ENCODE measurements at regions of chr14 and their contacts with region 1.

Region 1: DNA sequence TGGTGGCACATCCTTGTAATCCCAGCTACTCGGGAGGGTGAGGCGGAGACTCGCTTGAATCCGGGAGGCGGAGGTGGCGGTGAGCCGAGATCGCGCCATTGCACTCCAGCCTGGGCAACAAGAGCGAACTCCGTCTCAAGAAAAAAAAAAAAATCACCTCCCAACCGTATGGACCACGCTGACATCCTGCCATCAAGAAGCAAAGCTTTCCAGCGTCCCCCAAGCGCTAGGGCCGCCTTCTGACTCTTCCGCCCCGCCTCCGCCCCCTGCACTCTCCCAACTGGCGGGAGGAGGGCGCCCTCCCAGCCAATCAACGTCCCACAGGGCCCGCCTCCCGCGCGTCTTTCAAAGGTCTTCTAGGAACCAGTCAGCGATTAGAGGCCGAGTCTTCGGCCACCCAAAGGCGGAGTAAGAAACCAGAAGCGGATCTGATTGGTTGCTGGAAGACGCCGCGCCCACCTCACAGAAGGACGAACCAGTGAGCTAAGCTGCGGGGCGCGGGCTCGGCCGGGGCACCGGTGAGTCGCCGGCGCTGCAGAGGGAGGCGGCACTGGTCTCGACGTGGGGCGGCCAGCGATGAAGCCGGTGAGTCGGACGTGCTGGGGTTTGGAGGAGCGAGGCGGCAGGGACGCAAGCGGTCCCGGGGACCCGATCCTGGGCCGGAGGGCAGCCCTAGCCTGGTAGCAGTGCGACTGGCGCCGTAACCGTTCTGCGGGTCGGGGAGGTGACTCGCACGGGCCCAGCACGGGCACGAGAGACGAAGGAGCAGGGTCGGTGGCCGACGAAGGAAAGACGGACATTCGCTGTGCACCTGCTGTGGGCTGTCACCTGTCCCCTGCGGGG is at the start of gene CDKN3:
- DNase-seq: peak; percentile 99
- H3K4me3 Mint-ChIP-seq: peak within 1 kb of the TSS; percentile 86
- H3K27ac Mint-ChIP-seq: peak within 1 kb of the TSS; percentile 65
- H3K4me1 Mint-ChIP-seq: peaks cover 8% of the 10 kb centered on the region
- H3K27me3 Mint-ChIP-seq: peaks cover 2% of the 10 kb centered on the region
- total RNA-seq, gene CDKN3: 96.5 to 101 TPM

Region 2: GRCh38 chr14:52706724-52707706 is 1689.7 kb before region 1 on chr14 and contains the start of gene PSMC6:
- CTCF ChIA-PET with region 1: no interaction called
- intact Hi-C with region 1: loop called (anchors 1 kb)
- DNase-seq: peak; percentile 97
- H3K4me3 Mint-ChIP-seq: peak within 1 kb of the TSS; percentile 100
- H3K27ac Mint-ChIP-seq: peak within 1 kb of the TSS; percentile 97
- H3K4me1 Mint-ChIP-seq: peaks cover 47% of the 10 kb centered on the region
- H3K27me3 Mint-ChIP-seq: no peaks in the 10 kb centered on the region
- total RNA-seq, gene PSMC6: 103 to 114 TPM

Region 3: DNA sequence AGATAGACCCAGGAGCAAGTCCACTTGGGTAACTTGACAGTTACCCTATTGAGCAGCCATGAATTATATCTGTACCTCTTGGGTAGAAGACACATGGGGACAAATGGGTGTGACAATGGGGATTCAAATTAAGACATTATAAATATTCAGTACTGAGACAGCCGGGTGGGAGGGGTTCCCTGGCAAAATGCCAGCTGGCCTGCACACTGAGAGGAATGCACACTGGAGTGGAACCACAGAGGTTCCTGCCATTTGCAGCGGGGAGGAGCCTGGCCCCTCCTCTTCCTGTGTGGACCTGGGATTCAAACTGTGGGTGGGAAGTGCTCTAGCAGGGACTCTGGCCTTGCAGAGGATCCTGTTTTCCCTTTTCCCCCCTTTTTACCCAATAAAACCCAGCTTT is 118.6 kb before region 1 on chr14:
- CTCF ChIA-PET with region 1: no interaction called
- intact Hi-C with region 1: no loop called
- DNase-seq: no peak
- H3K4me3 Mint-ChIP-seq: no peak overlapping the region
- H3K27ac Mint-ChIP-seq: no peak overlapping the region
- H3K4me1 Mint-ChIP-seq: no peaks in the 10 kb centered on the region
- H3K27me3 Mint-ChIP-seq: peaks cover 8% of the 10 kb centered on the region

Region 4: GRCh38 chr14:54427871-54428270 is 31.2 kb after region 1 on chr14:
- CTCF ChIA-PET with region 1: no interaction called
- intact Hi-C with region 1: loop called (anchors 1 kb)
- DNase-seq: no peak
- H3K4me3 Mint-ChIP-seq: no peak overlapping the region
- H3K27ac Mint-ChIP-seq: no peak overlapping the region
- H3K4me1 Mint-ChIP-seq: peaks cover 45% of the 10 kb centered on the region
- H3K27me3 Mint-ChIP-seq: no peaks in the 10 kb centered on the region

Region 5: DNA sequence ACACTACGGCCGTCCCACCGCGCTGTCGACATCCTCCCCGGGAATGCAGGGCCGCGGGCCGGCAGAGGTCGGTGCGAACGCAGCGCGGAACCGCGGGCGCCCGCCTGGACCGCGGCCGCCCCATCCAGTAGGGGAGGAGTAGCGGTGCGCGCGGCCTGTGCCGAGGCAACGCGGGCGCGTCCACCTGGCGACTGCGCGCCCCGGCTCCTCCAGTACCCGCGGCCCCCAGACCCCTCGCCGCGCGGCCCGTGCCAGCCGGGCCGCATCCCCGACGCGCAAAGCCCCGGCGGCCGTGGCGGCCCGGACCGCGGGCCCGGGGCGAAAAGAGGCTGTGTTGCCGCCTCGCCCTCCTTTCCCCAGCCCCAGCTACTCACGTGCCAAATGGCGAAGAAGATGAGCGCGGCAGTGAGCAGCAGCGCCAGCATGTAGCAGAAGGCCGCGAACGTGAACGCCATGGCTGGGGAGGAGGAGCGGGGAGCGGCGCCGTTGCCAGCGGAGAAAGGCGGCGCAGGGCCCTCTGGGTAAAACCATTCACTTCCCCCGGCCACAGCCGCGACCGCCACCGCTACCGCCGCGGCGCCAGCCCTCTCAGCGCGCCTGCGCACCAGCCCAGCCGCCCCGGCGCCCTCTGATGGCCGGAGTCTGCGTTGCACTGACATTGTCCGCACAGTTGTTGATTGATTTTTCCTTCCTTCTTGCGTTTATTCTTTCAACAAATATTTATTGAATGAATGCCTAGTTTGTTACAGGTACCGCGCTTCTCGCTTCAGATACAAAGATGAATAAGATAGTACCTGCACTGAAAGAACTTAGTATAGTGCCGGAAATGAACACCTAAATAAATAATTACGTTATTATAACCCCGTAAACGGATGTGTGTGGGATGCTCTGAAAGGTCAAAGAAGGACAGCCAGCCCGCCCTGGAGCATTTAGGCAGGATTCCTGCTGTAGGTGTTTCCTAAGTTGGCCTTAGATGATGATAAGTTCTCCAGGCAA is 44.5 kb after region 1 on chr14 and contains the start of gene CNIH1:
- CTCF ChIA-PET with region 1: interaction called, 4 read pairs
- intact Hi-C with region 1: loop called (anchors 1 kb)
- DNase-seq: peak; percentile 93
- H3K4me3 Mint-ChIP-seq: peak within 1 kb of the TSS; percentile 87
- H3K27ac Mint-ChIP-seq: peak within 1 kb of the TSS; percentile 97
- H3K4me1 Mint-ChIP-seq: peaks cover 48% of the 10 kb centered on the region
- H3K27me3 Mint-ChIP-seq: no peaks in the 10 kb centered on the region
- total RNA-seq, gene CNIH1: 68.1 to 78.4 TPM

Region 6: GRCh38 chr14:54509546-54510501 is 113.1 kb after region 1 on chr14 and contains the start of gene CGRRF1:
- CTCF ChIA-PET with region 1: no interaction called
- intact Hi-C with region 1: loop called (anchors 1 kb)
- DNase-seq: peak; percentile 98
- H3K4me3 Mint-ChIP-seq: peak within 1 kb of the TSS; percentile 86
- H3K27ac Mint-ChIP-seq: peak within 1 kb of the TSS; percentile 52
- H3K4me1 Mint-ChIP-seq: peaks cover 41% of the 10 kb centered on the region
- H3K27me3 Mint-ChIP-seq: no peaks in the 10 kb centered on the region
- total RNA-seq, gene CGRRF1: 9.2 to 9.7 TPM

Region 7: GRCh38 chr14:54881235-54881760 is 484.6 kb after region 1 on chr14:
- CTCF ChIA-PET with region 1: no interaction called
- intact Hi-C with region 1: loop called (anchors 5 kb)
- DNase-seq: peak; percentile 38
- H3K4me3 Mint-ChIP-seq: peak overlapping the region; percentile 78
- H3K27ac Mint-ChIP-seq: peak overlapping the region; percentile 96
- H3K4me1 Mint-ChIP-seq: peaks cover 34% of the 10 kb centered on the region
- H3K27me3 Mint-ChIP-seq: no peaks in the 10 kb centered on the region

Measured in activated naive CD4-positive, alpha-beta T cell treated with anti-CD3 and anti-CD28 coated beads for 36 hours (primary cell).